AG04449 (cell line): ENCODE measurements at regions of chr11 and their contacts with region 1.

Region 1: DNA sequence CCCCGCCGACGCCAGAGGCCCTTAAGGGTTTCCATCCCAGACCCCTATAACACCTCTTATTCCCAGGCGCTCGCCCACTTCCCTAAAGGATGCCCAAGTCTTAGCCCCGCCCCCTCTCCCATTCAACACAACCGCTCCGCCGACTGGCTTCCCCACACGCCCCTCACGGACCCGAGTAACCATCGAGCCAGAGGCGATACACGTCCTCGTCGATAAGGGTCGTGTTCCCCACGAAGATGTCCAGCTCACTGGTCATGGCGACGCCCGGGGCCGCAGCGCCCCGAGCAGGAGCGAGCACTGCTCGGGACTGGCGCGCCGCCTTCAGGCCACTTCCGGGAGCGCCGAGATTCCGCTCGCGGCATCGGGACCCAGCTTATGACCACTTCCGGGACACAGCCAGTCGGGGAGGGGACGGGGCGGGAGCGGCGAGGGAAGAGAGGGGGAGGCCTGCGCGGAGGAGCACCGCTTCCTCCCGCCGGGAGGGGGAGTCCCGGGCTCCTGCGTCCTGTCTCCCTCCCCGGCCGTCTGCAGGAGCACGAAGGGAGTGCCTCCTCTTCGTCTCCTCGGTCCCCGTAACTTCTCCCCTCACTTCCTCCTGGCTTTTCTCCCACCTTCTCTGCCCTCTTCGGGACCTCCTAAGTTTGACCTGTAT is at the start of gene FIBP:
- DNase-seq: peak; percentile 75
- H3K4me3 ChIP-seq: peak within 1 kb of the TSS; percentile 94
- CTCF ChIP-seq: no peak

Region 2: DNA sequence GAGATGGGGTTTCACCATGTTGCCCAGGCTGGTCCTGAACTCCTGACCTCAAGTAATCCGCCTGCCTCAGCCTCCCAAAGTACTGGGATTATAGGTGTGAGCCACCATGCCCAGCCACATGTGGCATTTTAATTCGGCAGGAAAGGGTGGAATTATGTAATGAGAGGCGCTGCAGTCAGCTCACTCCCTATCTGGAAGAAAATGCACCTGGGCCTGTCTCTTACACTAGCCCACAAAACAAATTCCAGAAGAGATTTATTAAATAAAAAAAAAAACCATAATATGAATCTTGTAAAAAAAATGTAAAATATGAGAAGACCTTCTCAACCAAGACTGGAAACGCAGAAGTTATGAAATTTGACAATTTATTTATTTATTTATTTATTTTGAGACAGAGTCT is 184.4 kb before region 1 on chr11:
- CTCF ChIA-PET with region 1: interaction called, 16 read pairs
- POLR2A ChIA-PET with region 1: no interaction called
- DNase-seq: no peak
- H3K4me3 ChIP-seq: no peak overlapping the region
- CTCF ChIP-seq: no peak

Region 3: DNA sequence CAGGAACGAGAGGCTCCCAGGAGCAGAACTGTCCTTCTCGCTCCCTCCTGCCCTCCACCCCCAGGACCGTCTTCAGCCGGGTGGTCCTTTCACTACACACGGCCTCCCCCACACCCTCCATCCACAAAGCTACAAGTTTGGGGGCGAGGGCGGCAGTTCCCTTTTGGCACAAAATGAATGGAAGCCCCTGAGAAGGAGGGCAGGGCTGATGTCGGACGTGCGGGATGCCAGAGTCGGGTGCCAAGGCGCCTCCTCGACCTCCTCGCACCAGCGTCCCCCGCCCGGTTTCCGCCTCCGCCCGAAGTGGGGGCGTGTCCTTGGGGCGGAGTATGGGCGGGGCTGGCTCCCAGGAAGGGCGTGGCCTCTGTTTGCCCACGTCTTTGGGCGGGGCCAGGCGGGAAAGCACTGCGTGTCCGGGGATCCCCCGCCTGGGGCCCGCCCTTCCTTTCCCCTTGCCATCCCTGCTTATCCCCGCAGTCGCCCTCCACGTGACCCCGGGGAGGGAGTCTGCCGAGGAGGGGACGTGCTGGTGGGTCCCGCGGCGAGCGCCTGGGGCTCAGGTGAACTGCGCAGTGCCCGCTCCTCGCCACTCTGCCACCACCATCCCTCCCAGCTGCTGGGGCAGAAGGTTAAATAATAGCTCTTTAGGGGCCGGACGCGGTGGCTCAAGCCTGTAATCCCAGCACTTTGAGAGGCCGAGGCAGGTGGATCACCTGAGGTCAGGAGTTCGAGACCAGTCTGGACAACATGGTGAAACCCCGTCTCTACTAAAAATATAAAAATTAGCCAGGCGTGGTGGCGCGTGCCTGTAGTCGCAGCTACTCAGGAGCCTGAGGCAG is 14.8 kb before region 1 on chr11:
- CTCF ChIA-PET with region 1: interaction called, 364 read pairs
- POLR2A ChIA-PET with region 1: interaction called, 8 read pairs
- DNase-seq: no peak
- H3K4me3 ChIP-seq: peak overlapping the region; percentile 80
- CTCF ChIP-seq: no peak

Region 4: DNA sequence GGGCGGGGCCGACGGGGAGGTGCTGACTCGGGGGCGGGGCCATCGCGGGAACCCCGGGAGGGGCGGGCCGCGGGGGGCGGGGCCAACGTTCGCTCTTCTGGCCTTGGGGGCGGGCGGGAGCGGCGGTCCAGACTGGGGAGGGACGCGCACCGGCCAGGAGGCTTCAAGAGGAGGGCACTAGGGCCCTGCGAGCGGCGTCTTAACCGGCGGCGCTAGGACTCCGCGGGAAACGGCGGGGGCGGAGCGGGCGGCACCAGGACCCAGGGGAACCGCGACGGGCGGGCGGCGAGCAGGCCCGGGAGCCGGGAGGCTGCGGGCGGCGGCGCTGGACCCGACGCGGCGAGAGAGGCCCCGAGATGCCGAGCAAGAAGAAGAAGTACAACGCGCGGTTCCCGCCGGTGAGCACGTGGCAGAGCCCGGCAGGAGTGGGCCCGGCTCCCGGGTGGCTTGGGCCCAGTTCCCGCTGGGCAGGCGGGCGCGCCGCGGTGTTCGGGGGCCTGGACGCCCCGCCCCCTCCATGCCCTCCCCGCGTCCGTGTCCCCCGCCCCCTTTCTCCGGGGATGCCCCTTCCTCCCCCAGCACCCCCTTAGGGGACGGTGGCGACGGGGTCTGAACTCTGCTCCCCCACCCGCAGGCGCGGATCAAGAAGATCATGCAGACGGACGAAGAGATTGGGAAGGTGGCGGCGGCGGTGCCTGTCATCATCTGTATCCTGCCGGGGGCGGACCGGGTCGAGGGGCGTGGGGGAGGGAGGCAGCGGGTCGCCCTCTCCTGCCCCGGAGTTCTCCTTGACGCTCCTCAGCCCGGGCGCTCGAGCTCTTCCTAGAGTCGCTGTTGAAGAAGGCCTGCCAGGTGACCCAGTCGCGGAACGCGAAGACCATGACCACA is 31.1 kb after region 1 on chr11 and contains the start of gene DRAP1:
- CTCF ChIA-PET with region 1: interaction called, 40 read pairs
- POLR2A ChIA-PET with region 1: interaction called, 127 read pairs
- DNase-seq: peak; percentile 82
- H3K4me3 ChIP-seq: peak within 1 kb of the TSS; percentile 92
- CTCF ChIP-seq: no peak

Region 5: GRCh38 chr11:65947603-65948125 is 59.4 kb after region 1 on chr11:
- CTCF ChIA-PET with region 1: interaction called, 17 read pairs
- POLR2A ChIA-PET with region 1: no interaction called
- DNase-seq: no peak
- H3K4me3 ChIP-seq: no peak overlapping the region
- CTCF ChIP-seq: no peak

Region 6: GRCh38 chr11:66011239-66011784 is 123.0 kb after region 1 on chr11:
- CTCF ChIA-PET with region 1: interaction called, 11 read pairs
- POLR2A ChIA-PET with region 1: no interaction called
- DNase-seq: no peak
- H3K4me3 ChIP-seq: no peak overlapping the region
- CTCF ChIP-seq: no peak